ENCODE measurements at regions of chr6 and their contacts with region 1.

Region 1: GRCh38 chr6:99330159-99330558 is 19.3 kb downstream of the FAXC start:
- DNase-seq: peak; percentile 63
- H3K4me3 ChIP-seq: no peak overlapping the region
- H3K27ac ChIP-seq: peak overlapping the region in 1 of 2 experiments; percentile 47; a peak in 1 of 4 replicates
- H3K4me1 ChIP-seq: peaks cover 0 to 3% of the 10 kb centered on the region in 2 experiments; a peak in 2 of 4 replicates
- H3K27me3 ChIP-seq: no peaks in the 10 kb centered on the region
- CTCF ChIP-seq: peak; percentile 91
- EP300 ChIP-seq: no peak
- RAD21 ChIP-seq: peak; percentile 73

Region 2: DNA sequence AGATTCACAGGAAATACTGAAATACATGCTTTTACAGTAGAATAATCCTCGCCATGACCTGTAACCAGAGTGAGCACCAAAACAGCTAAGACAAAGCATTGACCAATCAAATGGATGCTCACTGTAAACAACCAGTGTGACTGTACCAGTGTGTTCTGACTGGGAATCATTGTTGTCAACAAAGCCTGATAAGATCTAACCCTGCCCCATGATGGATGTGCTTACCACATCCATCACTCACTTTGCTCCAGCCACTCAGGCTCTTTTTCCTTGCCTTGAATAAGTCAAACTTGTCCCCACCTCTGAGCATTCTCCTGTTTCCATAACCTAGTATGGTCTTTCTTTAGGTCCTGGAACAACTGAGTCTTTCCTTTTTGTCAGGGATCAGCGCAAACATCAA is 228.8 kb before region 1 on chr6:
- CTCF ChIA-PET with region 1: no interaction called
- POLR2A ChIA-PET with region 1: no interaction called
- DNase-seq: no peak
- H3K4me3 ChIP-seq: no peak overlapping the region
- H3K27ac ChIP-seq: no peak overlapping the region
- H3K4me1 ChIP-seq: no peaks in the 10 kb centered on the region
- H3K27me3 ChIP-seq: no peaks in the 10 kb centered on the region
- CTCF ChIP-seq: no peak
- EP300 ChIP-seq: no peak
- RAD21 ChIP-seq: no peak

Region 3: DNA sequence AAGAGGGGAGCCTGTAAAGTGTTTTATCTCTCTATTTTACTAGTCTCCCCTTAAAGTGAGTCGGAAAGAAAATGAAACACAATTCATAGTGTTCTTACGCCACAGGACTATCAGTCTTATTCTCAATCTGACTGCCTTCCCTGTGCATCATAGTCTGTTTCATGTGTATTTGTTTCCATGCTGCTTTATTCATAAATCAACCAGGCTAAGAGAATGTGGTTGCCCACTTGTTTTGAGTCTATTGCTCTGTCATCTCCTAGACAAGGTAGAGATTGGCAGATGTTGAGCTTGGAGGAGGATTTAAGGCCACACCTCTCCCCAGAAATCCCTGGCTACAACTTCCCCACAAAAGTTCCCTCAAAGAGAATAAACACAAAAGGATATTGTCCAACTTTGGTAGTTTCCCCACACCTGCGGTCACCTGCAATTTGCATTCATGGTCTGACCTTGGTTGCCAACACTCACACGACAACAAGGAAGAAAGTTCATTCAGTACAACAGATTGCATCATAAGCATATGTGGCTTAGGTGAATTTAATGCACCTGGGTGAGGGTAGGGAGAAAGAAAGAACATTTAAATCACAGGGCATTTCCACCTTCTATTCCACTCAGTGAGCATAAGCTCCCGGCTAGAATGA is 215.3 kb before region 1 on chr6:
- CTCF ChIA-PET with region 1: no interaction called
- POLR2A ChIA-PET with region 1: no interaction called
- DNase-seq: no peak
- H3K4me3 ChIP-seq: no peak overlapping the region
- H3K27ac ChIP-seq: no peak overlapping the region
- H3K4me1 ChIP-seq: no peaks in the 10 kb centered on the region
- H3K27me3 ChIP-seq: no peaks in the 10 kb centered on the region; the same call in 1 of the 2 replicates
- CTCF ChIP-seq: no peak
- EP300 ChIP-seq: no peak
- RAD21 ChIP-seq: no peak

Region 4: DNA sequence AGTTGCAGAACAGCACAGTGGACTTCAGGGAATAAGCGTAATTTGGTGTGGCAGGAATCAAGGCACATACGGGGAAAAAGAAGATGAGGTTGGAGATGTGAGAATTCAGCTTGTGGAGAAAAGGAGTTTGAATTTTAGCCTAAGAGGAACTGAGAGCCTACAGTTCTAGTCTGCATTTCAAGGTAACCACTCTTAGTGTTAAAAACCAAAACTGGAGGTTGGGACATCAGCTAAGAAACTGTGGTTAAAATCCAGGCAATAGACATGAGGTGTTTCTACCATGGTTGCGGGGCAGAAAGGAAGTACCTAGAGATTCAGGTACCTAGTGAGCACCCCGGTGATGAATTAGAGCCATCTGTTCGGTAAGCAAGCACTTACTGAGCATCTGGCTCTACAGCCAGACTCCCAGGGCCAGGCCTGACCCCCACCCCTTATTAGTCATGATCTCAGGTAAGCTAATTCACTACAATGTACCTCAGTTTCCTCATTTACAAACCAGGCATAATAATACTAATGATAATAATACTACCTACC is 25.1 kb before region 1 on chr6:
- CTCF ChIA-PET with region 1: interaction called, 10 read pairs
- POLR2A ChIA-PET with region 1: no interaction called
- DNase-seq: no peak
- H3K4me3 ChIP-seq: no peak overlapping the region
- H3K27ac ChIP-seq: no peak overlapping the region
- H3K4me1 ChIP-seq: no peaks in the 10 kb centered on the region; a peak in 1 of 4 replicates
- H3K27me3 ChIP-seq: no peaks in the 10 kb centered on the region
- CTCF ChIP-seq: no peak
- EP300 ChIP-seq: no peak
- RAD21 ChIP-seq: no peak

Region 5: DNA sequence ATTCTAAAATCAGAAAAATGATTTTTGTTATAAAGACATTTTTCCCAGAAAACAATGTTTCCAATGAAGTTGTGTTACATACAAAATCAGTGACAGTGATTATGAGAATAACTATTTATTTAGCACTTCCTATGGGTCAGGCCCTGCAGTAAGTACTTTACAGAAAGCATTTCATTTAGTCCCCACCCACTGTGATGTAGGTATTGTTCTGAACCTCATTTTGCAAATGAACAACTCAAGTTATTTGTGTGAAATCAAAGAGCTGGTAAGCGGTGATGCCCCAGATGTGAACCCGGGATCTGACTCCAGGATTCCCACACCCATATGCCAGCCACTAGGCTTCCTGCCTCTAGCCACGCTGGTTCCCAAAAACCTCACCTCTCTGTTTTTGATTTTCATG is 11.6 kb before region 1 on chr6:
- CTCF ChIA-PET with region 1: interaction called, 26 read pairs
- POLR2A ChIA-PET with region 1: no interaction called
- DNase-seq: no peak
- H3K4me3 ChIP-seq: no peak overlapping the region
- H3K27ac ChIP-seq: no peak overlapping the region
- H3K4me1 ChIP-seq: no peaks in the 10 kb centered on the region
- H3K27me3 ChIP-seq: no peaks in the 10 kb centered on the region
- CTCF ChIP-seq: no peak
- EP300 ChIP-seq: no peak
- RAD21 ChIP-seq: no peak

Region 6: DNA sequence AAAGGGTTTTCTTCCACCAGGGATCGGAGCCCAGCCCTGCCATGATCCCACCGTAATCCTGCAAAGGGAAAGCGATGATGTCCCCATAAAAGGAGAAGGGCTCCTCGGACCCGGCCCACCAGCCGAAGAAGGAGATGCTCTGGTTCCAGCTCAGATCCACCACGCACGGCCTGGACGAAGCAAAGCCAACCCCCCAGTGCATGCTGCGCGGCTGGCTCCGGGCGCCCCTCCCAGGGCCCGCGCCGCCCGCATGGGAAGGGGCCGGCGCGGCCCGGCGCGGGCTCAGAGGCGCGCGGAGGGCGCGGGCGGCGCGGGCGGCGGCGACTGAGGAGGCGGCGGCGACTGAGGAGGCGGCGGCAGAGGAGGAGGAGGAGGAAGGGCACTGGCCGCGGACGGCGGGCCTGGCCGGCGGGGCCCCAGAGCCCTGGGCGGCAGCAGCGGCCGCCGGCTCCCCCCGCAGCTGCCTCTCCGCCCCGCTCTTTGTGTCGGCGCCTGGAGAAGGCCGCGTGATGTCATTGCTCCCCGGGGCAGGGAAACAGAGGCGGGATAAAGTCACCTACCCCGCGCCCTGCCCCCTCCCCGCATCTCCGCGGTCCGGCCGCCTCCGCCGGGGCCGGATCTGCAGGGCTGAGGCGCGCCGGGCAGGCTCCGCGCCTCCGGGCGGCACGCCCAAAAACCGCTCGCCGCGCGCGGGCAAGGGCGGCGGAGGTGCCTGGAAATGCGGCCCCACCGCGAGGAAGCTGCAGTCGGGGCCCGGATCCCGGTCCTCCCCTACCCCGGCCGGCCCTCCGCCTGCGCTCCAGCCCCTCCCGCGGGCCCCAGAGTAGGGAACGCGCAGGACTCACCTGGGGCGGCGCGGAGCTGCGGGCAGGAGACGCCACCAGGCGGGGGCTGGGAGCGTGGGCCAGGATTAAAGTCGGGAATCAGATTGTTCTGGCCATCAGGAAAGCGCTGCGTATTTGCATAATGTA is 19.3 kb after region 1 on chr6 and contains the start of gene FAXC:
- CTCF ChIA-PET with region 1: interaction called, 28 read pairs
- POLR2A ChIA-PET with region 1: interaction called, 9 read pairs
- DNase-seq: peak; percentile 88
- H3K4me3 ChIP-seq: peak within 1 kb of the TSS; percentile 79 to 89
- H3K27ac ChIP-seq: peak within 1 kb of the TSS in 1 of 2 experiments; percentile 88; a peak in 2 of 4 replicates
- H3K4me1 ChIP-seq: peaks cover 0 to 7% of the 10 kb centered on the region in 2 experiments; a peak in 2 of 4 replicates
- H3K27me3 ChIP-seq: no peaks in the 10 kb centered on the region; the same call in 1 of the 2 replicates
- CTCF ChIP-seq: peak; percentile 43
- EP300 ChIP-seq: no peak
- RAD21 ChIP-seq: 0 out of 2 replicates have a peak, but pooled peaks have one; percentile 22
- polyA plus RNA-seq, gene FAXC: 9.0 and 9.1 TPM in 2 replicates

Region 7: GRCh38 chr6:99425647-99426453 is 95.7 kb after region 1 on chr6:
- CTCF ChIA-PET with region 1: interaction called, 28 read pairs
- POLR2A ChIA-PET with region 1: interaction called, 6 read pairs
- DNase-seq: peak; percentile 58
- H3K4me3 ChIP-seq: peak overlapping the region; percentile 90 to 99
- H3K27ac ChIP-seq: peak overlapping the region; percentile 97 to 99
- H3K4me1 ChIP-seq: peaks cover 8 to 13% of the 10 kb centered on the region in 2 experiments
- H3K27me3 ChIP-seq: no peaks in the 10 kb centered on the region
- CTCF ChIP-seq: peak; percentile 60
- EP300 ChIP-seq: peak in 1 of 2 experiments; percentile 21; a peak in 1 of 4 replicates
- RAD21 ChIP-seq: peak; percentile 55

Region 8: DNA sequence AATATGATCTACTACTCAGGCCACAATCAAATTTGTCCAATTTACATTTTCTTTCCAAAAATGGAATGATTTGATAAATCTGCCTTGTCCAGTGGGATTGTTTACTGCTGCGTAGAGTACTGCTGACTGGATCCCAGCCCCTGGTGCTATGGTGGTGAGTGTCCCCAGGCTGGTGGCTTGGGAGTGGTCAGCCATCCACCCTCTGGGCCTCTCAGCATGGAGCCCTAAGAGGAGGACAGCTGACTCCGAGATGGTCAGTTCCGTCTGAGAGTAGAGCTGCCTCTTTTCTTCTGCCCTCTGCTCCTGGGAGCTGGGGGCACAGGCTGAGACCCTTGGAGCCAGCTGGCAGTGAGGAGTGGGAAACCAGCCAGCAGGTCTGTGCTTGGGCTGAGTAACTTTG is 299.1 kb after region 1 on chr6:
- CTCF ChIA-PET with region 1: no interaction called
- POLR2A ChIA-PET with region 1: no interaction called
- DNase-seq: no peak
- H3K4me3 ChIP-seq: no peak overlapping the region
- H3K27ac ChIP-seq: no peak overlapping the region
- H3K4me1 ChIP-seq: no peaks in the 10 kb centered on the region
- H3K27me3 ChIP-seq: peaks cover 9% of the 10 kb centered on the region; the same call in 1 of the 2 replicates
- CTCF ChIP-seq: no peak
- EP300 ChIP-seq: no peak
- RAD21 ChIP-seq: no peak

Measured in SK-N-SH (cell line).